BJ (cell line): ENCODE measurements at regions of chr2 and their contacts with region 1.

Region 1: GRCh38 chr2:47065771-47066380 is 89.2 kb downstream of the STPG4 start:
- DNase-seq: peak; percentile 94
- H3K4me3 ChIP-seq: no peak overlapping the region
- H3K27me3 ChIP-seq: no peaks in the 10 kb centered on the region
- CTCF ChIP-seq: peak; percentile 10; the same call in 1 of the 2 replicates

Region 2: DNA sequence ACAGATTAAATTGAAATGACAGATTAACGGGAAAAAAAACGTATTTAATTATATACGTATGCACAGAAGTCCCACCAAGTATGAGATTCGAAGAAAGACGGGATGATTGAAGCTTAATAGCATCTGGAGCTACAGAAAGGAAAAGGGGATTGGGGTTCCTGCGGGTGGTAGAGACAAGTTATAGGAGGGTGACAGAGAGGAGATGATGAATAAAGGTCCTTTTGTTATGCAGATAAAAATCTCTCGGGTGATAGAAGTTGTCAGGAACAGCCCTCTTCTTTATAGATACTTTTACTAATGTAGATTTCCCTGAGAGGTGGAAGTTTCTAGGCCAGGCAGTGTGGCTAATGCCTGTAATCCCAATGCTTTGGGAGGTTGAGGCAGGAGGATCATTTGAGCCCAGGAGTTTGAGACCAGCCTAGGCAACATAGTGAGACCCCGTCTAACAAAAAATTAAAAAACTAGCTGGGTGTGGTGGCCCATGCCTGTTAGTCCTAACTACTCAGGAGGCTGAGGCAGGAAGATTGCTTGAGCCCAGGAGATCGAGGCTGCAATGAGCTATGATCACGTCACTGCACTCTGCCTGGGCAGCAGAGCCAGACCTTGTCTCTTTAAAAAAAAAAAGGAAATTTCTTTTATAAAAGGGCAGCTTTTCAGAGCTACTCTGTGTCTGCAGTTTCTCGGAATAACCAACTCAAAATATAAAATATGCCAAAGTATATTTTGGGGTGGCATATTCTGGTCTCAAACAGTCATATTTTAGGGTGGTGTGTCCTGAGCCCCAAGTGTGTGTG is 23.8 kb before region 1 on chr2:
- CTCF ChIA-PET with region 1: interaction called, 3 read pairs
- POLR2A ChIA-PET with region 1: interaction called, 11 read pairs
- DNase-seq: no peak
- H3K4me3 ChIP-seq: no peak overlapping the region
- H3K27me3 ChIP-seq: no peaks in the 10 kb centered on the region
- CTCF ChIP-seq: no peak

Region 3: GRCh38 chr2:47134386-47135090 is 68.7 kb after region 1 on chr2:
- CTCF ChIA-PET with region 1: no interaction called
- POLR2A ChIA-PET with region 1: interaction called, 12 read pairs
- DNase-seq: no peak
- H3K4me3 ChIP-seq: no peak overlapping the region
- H3K27me3 ChIP-seq: no peaks in the 10 kb centered on the region
- CTCF ChIP-seq: no peak